ENCODE measurements at regions of chr7 and their contacts with region 1.

Region 1: DNA sequence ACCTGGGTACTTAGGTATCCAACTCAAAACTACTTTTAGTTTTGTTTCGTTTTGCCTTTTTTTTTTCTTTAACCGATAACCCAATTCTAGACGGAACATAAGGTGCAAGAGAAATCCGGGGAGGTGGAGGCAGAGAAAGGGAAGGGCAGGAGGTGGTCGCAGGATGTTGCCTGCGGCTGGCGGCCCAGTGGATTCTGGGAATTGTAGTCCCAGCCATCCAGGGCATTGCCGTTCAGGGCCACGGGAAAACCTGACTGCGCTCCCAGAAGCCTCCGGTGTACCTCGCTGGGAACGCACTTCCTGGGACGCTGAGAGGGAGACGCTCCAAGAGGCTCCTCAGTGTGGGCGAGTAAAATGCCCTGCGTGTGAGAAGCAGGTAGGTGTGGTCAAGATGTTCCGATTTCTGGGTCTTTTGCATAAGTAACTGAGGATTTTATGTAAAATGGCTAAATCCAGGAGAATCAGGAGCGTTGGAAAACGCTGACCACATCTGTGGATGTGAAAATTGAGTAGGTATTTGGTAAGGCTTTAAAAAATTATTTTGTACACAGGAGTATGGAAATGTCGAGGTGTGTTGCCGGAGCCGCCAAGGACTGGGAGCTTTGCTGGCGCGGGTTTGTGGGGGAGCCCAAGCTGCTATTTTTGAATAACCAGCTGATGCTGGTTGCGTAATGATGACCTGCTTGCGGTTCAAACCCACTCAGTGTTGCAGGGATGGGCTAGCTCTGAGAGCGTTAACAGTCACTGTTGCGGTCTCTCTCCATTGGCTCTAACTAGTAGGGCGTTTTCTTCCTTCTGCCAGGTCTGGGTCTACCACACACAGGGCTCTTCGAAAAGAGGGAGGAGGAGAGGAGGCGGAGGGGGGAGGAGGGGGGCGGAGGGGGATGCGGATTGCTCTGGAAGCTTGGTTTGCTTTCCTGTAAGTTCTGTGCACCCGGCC is at the start of gene CLDN12:
- DNase-seq: peak; percentile 91
- H3K4me3 ChIP-seq: peak within 1 kb of the TSS; percentile 56 to 60
- H3K27ac ChIP-seq: peak within 1 kb of the TSS; percentile 93 to 96
- H3K4me1 ChIP-seq: no peaks in the 10 kb centered on the region
- H3K27me3 ChIP-seq: no peaks in the 10 kb centered on the region
- CTCF ChIP-seq: no peak
- POLR2A ChIP-seq: peak; percentile 72
- total RNA-seq, gene CLDN12: 33.1 to 43.9 TPM

Region 2: DNA sequence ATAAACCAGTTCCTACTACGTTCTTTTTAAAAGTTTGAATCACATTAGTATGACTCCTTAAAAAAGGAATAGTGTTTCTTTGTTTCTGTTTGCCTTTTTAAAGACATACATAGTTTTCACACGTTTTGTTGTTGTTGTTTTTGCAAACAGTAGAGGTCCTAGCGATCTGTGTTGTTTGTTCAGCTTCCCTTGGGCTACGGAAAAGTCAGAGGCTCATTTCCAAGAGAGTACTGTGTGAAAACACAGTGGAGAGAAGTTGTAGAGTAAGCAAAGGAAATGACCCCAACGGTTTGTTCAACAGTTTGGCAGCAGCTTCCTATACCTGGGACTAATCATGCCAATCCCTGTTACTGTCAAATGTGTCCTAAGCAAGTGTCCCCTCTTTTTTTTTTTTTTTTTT is 336.3 kb before region 1 on chr7:
- intact Hi-C with region 1: no loop called
- DNase-seq: no peak
- H3K4me3 ChIP-seq: no peak overlapping the region
- H3K27ac ChIP-seq: no peak overlapping the region
- H3K4me1 ChIP-seq: no peaks in the 10 kb centered on the region
- H3K27me3 ChIP-seq: no peaks in the 10 kb centered on the region
- CTCF ChIP-seq: no peak
- POLR2A ChIP-seq: no peak

Region 3: GRCh38 chr7:90211391-90212148 is 191.9 kb before region 1 on chr7 and contains the start of gene STEAP2:
- intact Hi-C with region 1: loop called (anchors 10 kb)
- DNase-seq: peak; percentile 90
- H3K4me3 ChIP-seq: peak within 1 kb of the TSS; percentile 75 to 87
- H3K27ac ChIP-seq: peak within 1 kb of the TSS; percentile 93 to 99
- H3K4me1 ChIP-seq: no peaks in the 10 kb centered on the region
- H3K27me3 ChIP-seq: no peaks in the 10 kb centered on the region
- CTCF ChIP-seq: peak in 3 of 4 experiments; percentile 27 to 72 (median 69)
- POLR2A ChIP-seq: peak; percentile 65
- total RNA-seq, gene STEAP2: 167 to 555 TPM

Region 4: DNA sequence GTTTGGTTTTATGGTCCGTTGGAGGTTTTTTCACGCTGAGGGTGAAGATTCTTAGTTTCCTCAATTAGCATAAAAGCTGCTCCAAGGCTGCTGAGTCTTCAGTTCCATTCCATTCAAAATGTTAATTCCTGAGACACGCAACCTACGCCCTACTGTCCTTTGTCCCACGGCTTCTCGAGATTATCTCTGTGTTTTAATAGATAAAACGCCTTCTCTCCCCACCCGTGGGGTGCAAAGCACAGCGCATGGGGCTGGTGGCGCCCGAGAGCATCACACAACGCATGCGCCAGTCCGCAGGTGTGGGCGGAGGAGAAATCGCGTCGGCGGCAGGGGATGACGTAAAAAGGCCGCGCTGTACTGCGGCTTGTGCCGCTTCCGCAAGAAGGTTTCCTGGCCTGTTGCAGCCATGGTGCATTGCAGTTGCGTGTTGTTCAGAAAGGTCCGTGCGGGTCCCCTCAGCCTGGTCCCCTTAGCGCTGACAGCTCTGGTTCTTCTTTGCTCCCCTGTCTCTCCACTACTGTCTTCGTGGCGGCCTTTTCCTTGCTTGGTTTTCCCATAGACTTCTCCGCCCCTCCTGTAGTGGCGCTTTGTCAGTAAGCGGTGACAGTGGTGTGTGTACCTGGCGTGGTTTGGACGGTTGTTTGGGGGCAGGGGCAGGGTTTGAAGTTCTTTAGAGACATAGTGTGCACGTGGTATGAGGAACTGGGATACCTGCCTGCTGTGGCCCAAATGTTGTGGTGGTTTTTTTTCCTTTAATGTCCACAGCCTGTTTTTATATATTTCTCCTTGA is 56.9 kb before region 1 on chr7 and contains the start of gene GTPBP10:
- intact Hi-C with region 1: loop called (anchors 5 kb)
- DNase-seq: peak; percentile 91
- H3K4me3 ChIP-seq: peak within 1 kb of the TSS; percentile 57 to 70
- H3K27ac ChIP-seq: peak within 1 kb of the TSS; percentile 83 to 87
- H3K4me1 ChIP-seq: peaks cover 7% of the 10 kb centered on the region
- H3K27me3 ChIP-seq: no peaks in the 10 kb centered on the region
- CTCF ChIP-seq: peak; percentile 39 to 94 (median 73)
- POLR2A ChIP-seq: peak; percentile 65
- total RNA-seq, gene GTPBP10: 16.2 to 20.4 TPM

Measured in prostate gland (tissue), 2 donors.